Heart left ventricle (tissue), 16 donors: ENCODE measurements at regions of chr12 and their contacts with region 1.

Region 1: GRCh38 chr12:48183091-48183875 is at the start of gene CCDC184:
- DNase-seq: peak; percentile 62 to 79 (median 76)
- ATAC-seq: peak; percentile 54 to 82 (median 80)
- H3K4me3 ChIP-seq: peak within 1 kb of the TSS; percentile 49 to 89 (median 70)
- H3K27ac ChIP-seq: peak within 1 kb of the TSS in 9 of 12 donors; percentile 1 to 72 (median 54)
- H3K4me1 ChIP-seq: peaks cover 0 to 28% (median 16%) of the 10 kb centered on the region in 12 donors
- H3K27me3 ChIP-seq: peaks cover 17 to 54% (median 31%) of the 10 kb centered on the region in 9 donors
- CTCF ChIP-seq: peak in 8 of 12 donors; percentile 7 to 65 (median 36)
- POLR2A ChIP-seq: peak in 1 of 2 donors; percentile 27
- total RNA-seq, gene CCDC184: 0.25 to 1.5 (median 0.54) TPM

Region 2: GRCh38 chr12:48629541-48629940 is 446.3 kb after region 1 on chr12:
- intact Hi-C with region 1: loop called in 1 of 10 experiments (anchors 10 kb)
- DNase-seq: no peak
- ATAC-seq: no peak
- H3K4me3 ChIP-seq: no peak overlapping the region
- H3K27ac ChIP-seq: no peak overlapping the region
- H3K4me1 ChIP-seq: no peaks in the 10 kb centered on the region
- H3K27me3 ChIP-seq: peaks cover 0 to 19% (median 0%) of the 10 kb centered on the region in 9 donors
- CTCF ChIP-seq: no peak
- POLR2A ChIP-seq: no peak